HCT116 (cell line): ENCODE measurements at regions of chr6 and their contacts with region 1.

Region 1: DNA sequence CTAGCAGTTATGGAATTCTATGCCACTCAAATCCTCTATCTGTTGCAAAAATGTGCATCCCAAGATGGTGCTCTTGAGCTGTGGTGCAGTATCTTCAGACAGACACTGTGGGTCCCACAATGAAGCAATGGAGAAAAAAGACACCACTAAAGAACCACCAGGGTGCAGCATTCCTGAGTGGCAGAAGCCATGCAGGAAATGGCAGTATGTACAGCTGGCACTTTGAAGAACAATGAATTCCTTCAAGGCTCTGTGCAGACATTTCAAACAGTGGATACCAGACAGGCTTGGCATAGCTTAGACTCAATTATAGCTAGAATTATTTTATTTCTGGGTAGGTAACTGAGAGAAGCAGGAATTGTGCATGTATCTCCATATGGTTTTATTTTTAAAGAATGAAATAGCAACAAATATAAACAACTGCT is 24.0 kb upstream of the HDAC2 start:
- DNase-seq: peak; percentile 88
- ATAC-seq: peak; percentile 88
- H3K4me3 ChIP-seq: no peak overlapping the region
- H3K27ac ChIP-seq: peak overlapping the region; percentile 23; the same call in 1 of the 2 replicates
- H3K4me1 ChIP-seq: peaks cover 32 to 50% of the 10 kb centered on the region in 2 experiments
- H3K27me3 ChIP-seq: no peaks in the 10 kb centered on the region
- CTCF ChIP-seq: peak; percentile 88 to 99 (median 97)
- POLR2A ChIP-seq: no peak
- RAD21 ChIP-seq: peak; percentile 98

Region 2: DNA sequence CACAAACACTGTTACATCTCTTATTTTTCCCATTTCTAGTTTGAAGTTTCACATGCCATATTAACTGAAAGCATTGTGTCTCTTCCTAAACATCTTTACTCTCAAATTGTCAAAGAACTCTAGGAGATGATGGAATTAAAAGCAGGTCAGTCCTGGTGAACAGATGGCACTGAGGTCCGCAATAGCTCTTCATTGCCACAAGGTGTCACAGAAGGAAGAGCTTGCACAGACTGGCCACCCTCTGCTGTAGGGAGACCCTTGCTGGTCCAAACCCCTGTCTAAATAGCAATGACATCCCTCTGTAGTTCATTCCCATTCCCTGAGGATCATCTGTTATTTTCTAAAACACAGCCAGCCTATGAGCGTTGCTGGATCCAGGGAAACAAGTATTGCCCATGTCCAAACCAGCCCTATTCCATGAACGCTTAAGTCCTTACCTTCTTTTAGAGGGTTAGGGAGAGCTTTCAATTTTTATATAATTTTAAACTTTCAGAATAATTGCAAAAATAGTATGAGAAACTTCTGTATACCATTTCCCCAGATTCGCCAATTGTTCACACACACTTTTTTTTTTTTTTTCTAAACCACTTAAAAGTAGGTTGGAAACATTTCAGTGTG is 13.9 kb before region 1 on chr6:
- CTCF ChIA-PET with region 1: interaction called, 15 read pairs
- POLR2A ChIA-PET with region 1: no interaction called
- RAD21 ChIA-PET with region 1: interaction called in 1 of 2 experiments, 3 read pairs
- intact Hi-C with region 1: no loop called
- DNase-seq: no peak
- ATAC-seq: peak; percentile 100
- H3K4me3 ChIP-seq: no peak overlapping the region
- H3K27ac ChIP-seq: no peak overlapping the region
- H3K4me1 ChIP-seq: no peaks in the 10 kb centered on the region
- H3K27me3 ChIP-seq: no peaks in the 10 kb centered on the region
- CTCF ChIP-seq: peak in 2 of 3 experiments; percentile 76 to 80; a peak in 4 of 6 replicates
- POLR2A ChIP-seq: no peak
- RAD21 ChIP-seq: peak; percentile 47

Region 3: DNA sequence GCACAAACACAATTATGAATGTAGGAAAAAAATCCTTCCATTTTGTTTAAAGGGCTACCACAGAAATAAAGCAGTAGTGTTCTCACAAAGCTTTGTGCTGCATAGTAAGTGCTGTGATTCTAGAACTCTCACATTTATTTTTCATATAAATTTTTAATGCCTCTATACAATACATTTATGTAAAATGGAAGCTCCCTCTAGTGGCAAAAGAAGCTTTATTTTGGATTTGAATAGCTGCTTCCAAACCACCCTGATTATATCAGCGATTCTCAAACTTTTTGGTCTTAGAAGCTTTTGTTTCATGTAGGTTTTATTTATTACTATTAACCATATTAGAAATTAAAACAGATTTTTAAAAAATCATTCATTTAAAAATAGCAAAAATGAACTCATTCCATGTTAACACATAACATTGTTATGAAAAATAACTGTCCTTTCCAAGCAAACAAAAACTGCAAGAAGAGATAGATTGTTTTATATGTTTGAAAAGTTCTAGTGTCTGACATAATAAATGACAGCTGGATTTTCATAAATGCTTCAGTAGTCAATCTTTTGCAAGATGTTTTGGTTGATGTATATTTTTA is 309.5 kb after region 1 on chr6:
- CTCF ChIA-PET with region 1: interaction called, 23 read pairs
- POLR2A ChIA-PET with region 1: no interaction called
- RAD21 ChIA-PET with region 1: interaction called in 1 of 2 experiments, 5 read pairs
- intact Hi-C with region 1: loop called (anchors 1 kb)
- DNase-seq: peak; percentile 3
- ATAC-seq: peak; percentile 44; the same call in 1 of the 2 replicates
- H3K4me3 ChIP-seq: no peak overlapping the region
- H3K27ac ChIP-seq: no peak overlapping the region
- H3K4me1 ChIP-seq: no peaks in the 10 kb centered on the region
- H3K27me3 ChIP-seq: no peaks in the 10 kb centered on the region
- CTCF ChIP-seq: peak; percentile 39 to 54 (median 43); a peak in 5 of 6 replicates
- POLR2A ChIP-seq: no peak
- RAD21 ChIP-seq: peak; percentile 34

Region 4: GRCh38 chr6:115896538-115897129 is 1901.7 kb after region 1 on chr6:
- CTCF ChIA-PET with region 1: interaction called, 6 read pairs
- POLR2A ChIA-PET with region 1: no interaction called
- RAD21 ChIA-PET with region 1: no interaction called
- intact Hi-C with region 1: loop called (anchors 5 kb)
- DNase-seq: peak; percentile 34
- ATAC-seq: peak; percentile 70
- H3K4me3 ChIP-seq: no peak overlapping the region
- H3K27ac ChIP-seq: no peak overlapping the region
- H3K4me1 ChIP-seq: no peaks in the 10 kb centered on the region
- H3K27me3 ChIP-seq: peaks cover 9% of the 10 kb centered on the region; the same call in 1 of the 2 replicates
- CTCF ChIP-seq: peak; percentile 51 to 84 (median 70); a peak in 5 of 6 replicates
- POLR2A ChIP-seq: no peak
- RAD21 ChIP-seq: peak; percentile 78